Activated CD8-positive, alpha-beta memory T cell treated with anti-CD3 and anti-CD28 coated beads, Interleukin-2, amount 10 ng/mL, durations not matched to agents 7 days and 5 days (primary cell): ENCODE measurements at regions of chr3 and their contacts with region 1.

Region 1: DNA sequence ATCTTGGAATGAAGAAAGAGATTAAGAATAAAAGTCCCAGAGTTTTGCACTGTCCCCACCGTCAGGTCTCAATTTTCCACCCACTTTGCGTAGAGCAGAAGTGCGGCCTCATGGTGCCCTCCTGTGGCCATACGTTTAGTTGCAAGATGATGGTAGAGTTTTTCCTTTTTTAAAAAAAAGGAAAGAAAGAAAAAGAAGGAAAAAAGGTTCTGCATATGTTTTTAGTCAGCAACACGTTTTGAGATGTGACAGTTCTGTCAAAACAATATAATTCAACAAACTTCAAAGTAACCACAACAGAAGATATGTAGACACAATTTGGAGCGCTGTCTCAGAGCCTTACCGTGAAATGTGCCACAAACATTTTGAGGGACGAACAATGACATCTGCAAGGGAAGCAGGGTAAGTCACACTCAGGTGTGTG is 24.6 kb downstream of the EBLN2 start:
- DNase-seq: peak; percentile 52
- ATAC-seq: peak; percentile 57
- H3K4me3 Mint-ChIP-seq: no peak overlapping the region
- H3K27ac Mint-ChIP-seq: no peak overlapping the region
- H3K4me1 Mint-ChIP-seq: peaks cover 5% of the 10 kb centered on the region
- H3K27me3 Mint-ChIP-seq: no peaks in the 10 kb centered on the region

Region 2: DNA sequence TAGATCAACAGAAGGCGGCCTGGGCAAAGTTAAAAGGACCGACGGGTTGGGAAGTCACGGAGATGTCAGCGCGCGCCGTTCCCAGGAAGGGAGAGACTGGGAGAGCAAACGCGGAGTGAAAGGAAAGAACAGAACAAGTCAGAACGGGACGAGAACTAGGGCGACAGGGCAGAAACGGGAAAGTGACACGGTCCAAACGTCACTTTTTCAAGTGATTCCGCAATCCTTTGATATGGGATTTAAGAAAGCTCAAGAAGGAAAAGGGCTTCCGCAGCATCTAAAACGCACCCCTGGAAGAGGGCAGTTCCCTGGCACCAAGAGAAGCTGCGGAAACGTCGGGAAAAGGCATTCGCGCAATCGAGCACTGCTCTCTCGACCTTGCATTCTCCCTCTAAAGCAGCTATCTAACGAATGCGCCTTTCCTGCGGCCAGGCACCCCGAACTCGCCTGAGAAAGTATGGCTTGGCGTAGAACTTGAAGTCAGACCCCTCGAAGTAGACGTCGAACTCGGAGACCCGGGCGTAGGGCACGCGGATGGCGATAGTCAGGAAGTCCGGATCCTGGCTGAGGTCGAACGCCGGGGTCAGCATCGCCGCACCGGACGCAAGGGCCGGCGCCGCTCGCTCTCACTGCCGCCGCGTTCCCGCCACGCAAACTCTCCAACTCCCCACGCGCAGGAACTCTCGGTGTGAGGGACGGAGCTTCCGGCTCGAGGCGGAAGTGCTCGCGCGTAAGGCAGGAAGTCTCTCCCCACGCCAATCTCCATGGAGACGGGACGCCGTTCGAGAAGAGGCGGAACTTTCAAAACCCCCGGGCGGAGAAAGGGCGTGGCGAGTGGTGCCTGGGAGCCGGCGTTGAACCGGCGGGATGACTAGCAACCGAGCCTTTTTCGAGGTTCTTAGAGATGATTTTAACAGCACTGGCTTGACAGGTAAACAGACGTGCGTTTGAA is 238.1 kb before region 1 on chr3 and contains the start of gene SHQ1:
- CTCF ChIA-PET with region 1: interaction called, 21 read pairs
- DNase-seq: peak; percentile 97
- ATAC-seq: peak; percentile 93
- H3K4me3 Mint-ChIP-seq: peak within 1 kb of the TSS; percentile 92
- H3K27ac Mint-ChIP-seq: peak within 1 kb of the TSS; percentile 76
- H3K4me1 Mint-ChIP-seq: peaks cover 45% of the 10 kb centered on the region
- H3K27me3 Mint-ChIP-seq: peaks cover 5% of the 10 kb centered on the region
- total RNA-seq, gene SHQ1: 27.4 to 30.7 TPM

Region 3: GRCh38 chr3:72938471-72939265 is 147.4 kb before region 1 on chr3:
- CTCF ChIA-PET with region 1: interaction called, 13 read pairs
- DNase-seq: no peak
- ATAC-seq: peak; percentile 94
- H3K4me3 Mint-ChIP-seq: no peak overlapping the region
- H3K27ac Mint-ChIP-seq: no peak overlapping the region
- H3K4me1 Mint-ChIP-seq: no peaks in the 10 kb centered on the region
- H3K27me3 Mint-ChIP-seq: peaks cover 27% of the 10 kb centered on the region